ENCODE measurements at regions of chr3 and their contacts with region 1.

Region 1: GRCh38 chr3:25648107-25648535 is 16.6 kb downstream of the TOP2B start:
- DNase-seq: peak in 2 of 3 donors; percentile 25 to 77
- ATAC-seq: peak; percentile 100
- H3K4me3 ChIP-seq: no peak overlapping the region
- H3K27ac ChIP-seq: no peak overlapping the region
- H3K4me1 ChIP-seq: peaks cover 0 to 10% (median 2%) of the 10 kb centered on the region in 4 donors
- H3K27me3 ChIP-seq: no peaks in the 10 kb centered on the region
- CTCF ChIP-seq: peak; percentile 88 to 97 (median 92)
- POLR2A ChIP-seq: no peak

Region 2: GRCh38 chr3:25856902-25857518 is 208.9 kb after region 1 on chr3:
- intact Hi-C with region 1: loop called in 1 of 2 experiments (anchors 10 kb)
- DNase-seq: no peak
- ATAC-seq: peak; percentile 81 to 92 (median 85)
- H3K4me3 ChIP-seq: no peak overlapping the region
- H3K27ac ChIP-seq: no peak overlapping the region
- H3K4me1 ChIP-seq: no peaks in the 10 kb centered on the region
- H3K27me3 ChIP-seq: no peaks in the 10 kb centered on the region
- CTCF ChIP-seq: peak; percentile 73 to 81 (median 75)
- POLR2A ChIP-seq: no peak

Measured in right lobe of liver (tissue), 6 donors.